PC-9 (cell line): ENCODE measurements at regions of chr11 and their contacts with region 1.

Region 1: DNA sequence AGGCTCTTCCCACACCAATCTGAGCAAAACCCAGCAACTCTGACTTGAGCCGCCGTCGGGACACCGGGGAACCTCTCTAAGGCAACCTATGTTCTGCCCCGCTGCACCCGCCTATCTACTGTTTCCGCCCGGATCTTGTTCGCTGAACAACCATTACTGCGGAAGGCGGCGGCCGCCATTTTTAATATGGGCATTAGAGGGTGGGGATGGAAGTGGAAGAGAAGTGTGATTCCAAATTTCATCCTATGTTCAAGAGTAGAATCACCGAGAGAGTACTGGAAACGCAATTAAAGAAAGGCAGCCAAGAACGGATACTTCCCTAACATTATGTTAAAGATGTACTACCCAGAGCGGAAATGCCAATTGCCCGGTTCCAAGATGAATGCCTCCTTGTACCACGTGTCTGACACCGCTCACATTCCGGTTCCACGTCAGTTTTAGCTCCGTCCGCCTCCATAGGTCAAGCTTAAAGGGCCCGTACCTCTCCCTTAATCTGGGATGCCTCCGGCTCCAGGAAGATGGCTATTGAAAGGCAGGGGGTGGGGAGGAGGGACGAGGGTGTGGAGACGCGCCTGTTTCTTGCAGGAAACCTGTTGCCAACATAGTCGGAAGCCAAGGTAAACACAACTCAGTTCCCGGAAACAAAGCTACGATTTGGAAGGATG is at the start of gene DPAGT1:
- DNase-seq: peak; percentile 85 to 98
- H3K4me3 ChIP-seq: peak within 1 kb of the TSS; percentile 79
- H3K27ac ChIP-seq: peak within 1 kb of the TSS; percentile 87
- H3K4me1 ChIP-seq: peaks cover 31% of the 10 kb centered on the region
- H3K27me3 ChIP-seq: no peaks in the 10 kb centered on the region
- CTCF ChIP-seq: no peak
- total RNA-seq, gene DPAGT1: 32.8 and 41.1 TPM in 2 replicates

Region 2: DNA sequence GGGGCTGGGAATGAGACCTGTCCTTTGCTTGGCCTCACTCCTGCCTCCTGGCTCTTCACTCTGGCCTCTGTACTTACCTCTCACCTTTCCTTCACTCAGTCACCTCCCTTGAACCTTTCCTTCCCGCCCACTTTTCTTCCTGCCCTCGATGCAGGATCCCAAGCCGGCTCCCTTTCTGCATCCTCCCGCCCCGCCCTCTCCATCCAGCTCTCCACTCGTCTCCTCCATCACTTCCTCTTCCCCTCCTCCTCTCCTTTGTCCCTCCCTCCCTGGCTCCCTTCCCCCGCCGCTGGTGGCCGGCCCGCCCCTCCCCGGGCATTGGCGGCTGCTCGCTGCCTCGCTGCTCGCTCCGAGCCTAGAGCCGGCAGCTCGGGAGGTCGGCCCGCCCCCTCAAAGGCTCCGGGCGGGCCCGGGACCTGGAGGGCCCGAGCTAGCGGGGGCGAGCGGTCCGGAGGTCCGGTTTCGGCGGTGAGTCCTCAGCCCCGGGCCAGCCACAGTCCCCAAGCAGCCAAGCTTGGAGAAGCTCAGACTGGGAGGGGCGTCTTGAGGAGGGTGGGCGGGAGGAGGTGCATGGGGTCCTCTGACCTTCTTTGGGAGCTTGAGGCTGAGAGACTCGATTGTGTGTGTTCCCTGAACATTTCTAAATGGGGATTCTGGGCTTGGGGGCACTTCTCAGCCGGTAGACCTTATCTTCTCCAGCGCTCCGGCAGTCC is 480.7 kb before region 1 on chr11:
- CTCF ChIA-PET with region 1: no interaction called
- POLR2A ChIA-PET with region 1: interaction called, 11 read pairs
- intact Hi-C with region 1: no loop called
- DNase-seq: peak; percentile 82 to 91
- H3K4me3 ChIP-seq: peak overlapping the region; percentile 67
- H3K27ac ChIP-seq: peak overlapping the region; percentile 79
- H3K4me1 ChIP-seq: peaks cover 62% of the 10 kb centered on the region
- H3K27me3 ChIP-seq: no peaks in the 10 kb centered on the region
- CTCF ChIP-seq: no peak

Region 3: GRCh38 chr11:119030329-119031049 is 71.4 kb before region 1 on chr11 and contains the start of gene SLC37A4:
- CTCF ChIA-PET with region 1: no interaction called
- POLR2A ChIA-PET with region 1: interaction called, 11 read pairs
- intact Hi-C with region 1: no loop called
- DNase-seq: peak; percentile 98 to 99
- H3K4me3 ChIP-seq: peak within 1 kb of the TSS; percentile 80
- H3K27ac ChIP-seq: no peak within 1 kb of the TSS
- H3K4me1 ChIP-seq: peaks cover 14% of the 10 kb centered on the region; the same call in 1 of the 2 replicates
- H3K27me3 ChIP-seq: no peaks in the 10 kb centered on the region
- CTCF ChIP-seq: peak; percentile 92; the same call in 1 of the 2 replicates
- total RNA-seq, gene SLC37A4: 23.2 and 24.3 TPM in 2 replicates

Region 4: GRCh38 chr11:119121008-119121810 is 19.3 kb after region 1 on chr11 and contains the start of gene HINFP:
- CTCF ChIA-PET with region 1: interaction called, 4 read pairs
- POLR2A ChIA-PET with region 1: interaction called, 8 read pairs
- intact Hi-C with region 1: loop called (anchors 2 kb)
- DNase-seq: peak; percentile 99
- H3K4me3 ChIP-seq: peak within 1 kb of the TSS; percentile 75
- H3K27ac ChIP-seq: peak within 1 kb of the TSS; percentile 10; the same call in 1 of the 2 replicates
- H3K4me1 ChIP-seq: peaks cover 18% of the 10 kb centered on the region
- H3K27me3 ChIP-seq: no peaks in the 10 kb centered on the region
- CTCF ChIP-seq: no peak
- total RNA-seq, gene HINFP: 34.9 and 35.5 TPM in 2 replicates

Region 5: DNA sequence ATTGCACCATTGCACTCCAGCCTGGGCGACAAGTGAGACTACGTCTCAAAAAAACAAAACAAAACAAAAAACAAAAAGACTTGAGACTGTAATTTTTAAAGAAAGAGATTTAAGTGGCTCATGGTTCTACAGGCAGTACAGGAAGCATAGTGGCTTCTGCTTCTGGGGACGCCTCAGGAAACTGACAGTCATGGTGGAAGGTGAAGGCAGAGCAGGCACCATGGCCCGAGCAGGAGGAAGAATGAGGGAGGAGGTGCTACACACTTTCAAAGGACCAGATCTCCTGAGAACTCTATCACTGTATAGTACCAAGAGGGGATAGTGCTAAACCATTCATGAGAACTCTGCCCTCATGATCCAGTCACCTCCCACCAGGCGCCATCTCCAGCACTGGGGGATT is 156.3 kb after region 1 on chr11:
- CTCF ChIA-PET with region 1: no interaction called
- POLR2A ChIA-PET with region 1: interaction called, 15 read pairs
- intact Hi-C with region 1: no loop called
- DNase-seq: no peak
- H3K4me3 ChIP-seq: no peak overlapping the region
- H3K27ac ChIP-seq: no peak overlapping the region
- H3K4me1 ChIP-seq: no peaks in the 10 kb centered on the region
- H3K27me3 ChIP-seq: no peaks in the 10 kb centered on the region
- CTCF ChIP-seq: no peak

Region 6: GRCh38 chr11:119952441-119952840 is 850.5 kb after region 1 on chr11:
- CTCF ChIA-PET with region 1: no interaction called
- POLR2A ChIA-PET with region 1: interaction called, 15 read pairs
- intact Hi-C with region 1: no loop called
- DNase-seq: no peak
- H3K4me3 ChIP-seq: no peak overlapping the region
- H3K27ac ChIP-seq: no peak overlapping the region
- H3K4me1 ChIP-seq: no peaks in the 10 kb centered on the region
- H3K27me3 ChIP-seq: peaks cover 80% of the 10 kb centered on the region
- CTCF ChIP-seq: no peak